IMR-90 (cell line): ENCODE measurements at regions of chr2 and their contacts with region 1.

Region 1: GRCh38 chr2:226799181-226799975 is at the start of gene IRS1:
- DNase-seq: peak; percentile 79
- ATAC-seq: peak; percentile 40
- H3K4me3 ChIP-seq: peak within 1 kb of the TSS; percentile 78
- H3K27ac ChIP-seq: peak within 1 kb of the TSS; percentile 97
- H3K4me1 ChIP-seq: peaks cover 2% of the 10 kb centered on the region; the same call in 1 of the 2 replicates
- H3K27me3 ChIP-seq: no peaks in the 10 kb centered on the region
- CTCF ChIP-seq: peak; percentile 62
- POLR2A ChIP-seq: no peak
- RAD21 ChIP-seq: peak; percentile 53
- total RNA-seq, gene IRS1: 21.1 and 29.4 TPM in 2 replicates

Region 2: GRCh38 chr2:225889446-225889850 is 909.9 kb before region 1 on chr2:
- CTCF ChIA-PET with region 1: interaction called, 4 read pairs
- POLR2A ChIA-PET with region 1: no interaction called
- dilution Hi-C with region 1: no loop called
- in situ Hi-C with region 1: loop called (anchors 5 kb)
- intact Hi-C with region 1: loop called (anchors 1 kb)
- DNase-seq: peak; percentile 94
- ATAC-seq: peak; percentile 81
- H3K4me3 ChIP-seq: no peak overlapping the region
- H3K27ac ChIP-seq: peak overlapping the region; percentile 40; the same call in 1 of the 2 replicates
- H3K4me1 ChIP-seq: peaks cover 6% of the 10 kb centered on the region
- H3K27me3 ChIP-seq: no peaks in the 10 kb centered on the region
- CTCF ChIP-seq: peak; percentile 85
- POLR2A ChIP-seq: no peak
- RAD21 ChIP-seq: peak; percentile 82

Region 3: GRCh38 chr2:226118471-226119430 is 680.6 kb before region 1 on chr2:
- CTCF ChIA-PET with region 1: interaction called, 3 read pairs
- POLR2A ChIA-PET with region 1: interaction called, 4 read pairs
- dilution Hi-C with region 1: no loop called
- in situ Hi-C with region 1: loop called (anchors 5 kb)
- intact Hi-C with region 1: no loop called
- DNase-seq: peak; percentile 91
- ATAC-seq: peak; percentile 42
- H3K4me3 ChIP-seq: peak overlapping the region; percentile 6; the same call in 1 of the 2 replicates
- H3K27ac ChIP-seq: peak overlapping the region; percentile 92
- H3K4me1 ChIP-seq: peaks cover 8% of the 10 kb centered on the region
- H3K27me3 ChIP-seq: no peaks in the 10 kb centered on the region
- CTCF ChIP-seq: no peak
- POLR2A ChIP-seq: no peak
- RAD21 ChIP-seq: no peak; the same call in 1 of the 2 replicates

Region 4: DNA sequence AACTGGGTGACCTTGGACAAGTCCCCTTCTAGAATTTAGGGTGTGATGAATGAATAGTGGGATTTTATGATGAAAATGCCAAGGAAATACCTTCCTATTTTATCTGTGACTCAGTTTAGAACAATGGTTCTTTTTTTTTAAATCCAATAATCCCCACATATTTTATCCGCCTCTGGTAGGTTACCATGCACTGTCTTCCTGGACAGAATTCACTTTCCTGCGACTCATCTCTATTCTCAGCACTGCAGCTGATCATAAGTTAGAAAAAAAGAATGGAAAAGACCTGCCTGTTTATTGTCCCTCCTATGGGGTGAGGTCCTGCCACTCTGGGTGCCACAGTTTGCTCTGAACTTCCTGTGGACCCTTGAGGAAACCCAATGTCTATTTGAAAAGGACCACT is 72.8 kb before region 1 on chr2:
- CTCF ChIA-PET with region 1: no interaction called
- POLR2A ChIA-PET with region 1: no interaction called
- dilution Hi-C with region 1: no loop called
- in situ Hi-C with region 1: no loop called
- intact Hi-C with region 1: loop called (anchors 2 kb)
- DNase-seq: peak; percentile 63
- ATAC-seq: peak; percentile 19; the same call in 1 of the 2 replicates
- H3K4me3 ChIP-seq: no peak overlapping the region
- H3K27ac ChIP-seq: peak overlapping the region; percentile 60; the same call in 1 of the 2 replicates
- H3K4me1 ChIP-seq: peaks cover 10% of the 10 kb centered on the region
- H3K27me3 ChIP-seq: no peaks in the 10 kb centered on the region
- CTCF ChIP-seq: no peak
- POLR2A ChIP-seq: no peak
- RAD21 ChIP-seq: no peak

Region 5: DNA sequence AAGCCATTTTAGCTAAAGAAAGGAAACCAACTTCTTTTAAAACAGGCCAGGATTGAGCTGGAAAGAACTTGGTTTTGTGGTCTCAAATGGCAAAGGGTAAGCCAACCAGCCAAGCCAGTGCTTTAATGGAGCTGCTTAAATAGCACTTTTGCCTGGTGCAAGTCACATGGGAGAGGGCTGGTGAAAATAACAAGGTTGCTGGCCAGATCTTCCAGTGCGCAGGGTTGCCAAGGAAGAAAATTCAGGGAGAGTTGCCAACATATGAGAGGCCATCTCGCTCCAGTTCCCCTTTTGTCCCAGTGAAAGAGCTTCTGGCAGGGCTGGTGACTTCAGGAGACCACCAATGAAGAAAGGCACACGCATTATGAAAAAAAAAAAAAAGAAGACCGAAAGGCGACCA is 57.0 kb before region 1 on chr2:
- CTCF ChIA-PET with region 1: interaction called, 3 read pairs
- POLR2A ChIA-PET with region 1: interaction called, 11 read pairs
- dilution Hi-C with region 1: no loop called
- in situ Hi-C with region 1: no loop called
- intact Hi-C with region 1: loop called (anchors 5 kb)
- DNase-seq: peak; percentile 13
- ATAC-seq: no peak
- H3K4me3 ChIP-seq: no peak overlapping the region
- H3K27ac ChIP-seq: peak overlapping the region; percentile 62; the same call in 1 of the 2 replicates
- H3K4me1 ChIP-seq: peaks cover 26% of the 10 kb centered on the region
- H3K27me3 ChIP-seq: no peaks in the 10 kb centered on the region
- CTCF ChIP-seq: no peak
- POLR2A ChIP-seq: no peak
- RAD21 ChIP-seq: no peak

Region 6: DNA sequence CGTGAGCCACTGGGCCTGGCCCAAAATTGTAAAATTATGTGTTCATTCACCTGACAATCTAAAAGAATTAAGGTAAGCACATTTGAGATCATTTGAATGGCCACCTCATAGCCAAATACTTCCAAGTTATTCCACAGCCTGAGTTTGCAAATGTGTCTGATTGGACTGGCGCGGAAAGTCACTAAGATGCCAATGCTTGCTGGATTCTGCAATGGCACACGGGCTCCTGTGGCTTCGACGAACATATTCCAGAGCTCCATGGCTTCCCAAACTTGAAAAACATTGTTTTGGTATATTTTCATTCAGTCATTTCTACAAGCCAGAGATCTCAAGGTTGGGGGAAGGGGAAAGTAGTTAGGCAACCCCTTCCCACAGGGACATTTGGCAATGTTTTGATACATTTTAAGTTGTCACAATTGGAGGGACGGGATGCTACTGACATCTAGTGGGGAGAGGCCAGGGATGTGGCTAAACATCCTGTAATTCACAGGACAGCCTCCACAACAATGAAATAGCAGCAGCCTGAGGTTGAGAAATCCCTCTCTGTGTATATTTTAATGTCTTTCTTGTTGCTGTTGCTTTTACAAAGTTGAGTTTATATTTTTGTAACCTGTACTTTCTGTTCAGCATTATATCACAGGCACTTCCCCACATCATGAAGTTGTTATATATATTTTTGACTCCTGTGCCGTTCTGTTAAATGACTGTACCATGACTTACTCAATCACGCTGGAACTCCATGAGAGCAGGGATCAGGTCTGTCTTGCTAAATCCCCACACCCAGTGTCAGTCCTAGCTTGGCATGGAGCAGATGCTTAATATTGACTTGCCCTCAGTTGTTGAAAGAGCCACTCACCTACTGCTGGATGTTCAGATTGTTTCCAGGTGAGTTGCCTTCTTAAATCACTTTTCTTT is 307.7 kb after region 1 on chr2:
- CTCF ChIA-PET with region 1: no interaction called
- POLR2A ChIA-PET with region 1: no interaction called
- dilution Hi-C with region 1: no loop called
- in situ Hi-C with region 1: no loop called
- intact Hi-C with region 1: loop called (anchors 1 kb)
- DNase-seq: peak; percentile 71
- ATAC-seq: peak; percentile 98
- H3K4me3 ChIP-seq: no peak overlapping the region
- H3K27ac ChIP-seq: no peak overlapping the region
- H3K4me1 ChIP-seq: no peaks in the 10 kb centered on the region
- H3K27me3 ChIP-seq: peaks cover 2% of the 10 kb centered on the region; the same call in 1 of the 2 replicates
- CTCF ChIP-seq: peak; percentile 93
- POLR2A ChIP-seq: no peak
- RAD21 ChIP-seq: peak; percentile 90

Region 7: DNA sequence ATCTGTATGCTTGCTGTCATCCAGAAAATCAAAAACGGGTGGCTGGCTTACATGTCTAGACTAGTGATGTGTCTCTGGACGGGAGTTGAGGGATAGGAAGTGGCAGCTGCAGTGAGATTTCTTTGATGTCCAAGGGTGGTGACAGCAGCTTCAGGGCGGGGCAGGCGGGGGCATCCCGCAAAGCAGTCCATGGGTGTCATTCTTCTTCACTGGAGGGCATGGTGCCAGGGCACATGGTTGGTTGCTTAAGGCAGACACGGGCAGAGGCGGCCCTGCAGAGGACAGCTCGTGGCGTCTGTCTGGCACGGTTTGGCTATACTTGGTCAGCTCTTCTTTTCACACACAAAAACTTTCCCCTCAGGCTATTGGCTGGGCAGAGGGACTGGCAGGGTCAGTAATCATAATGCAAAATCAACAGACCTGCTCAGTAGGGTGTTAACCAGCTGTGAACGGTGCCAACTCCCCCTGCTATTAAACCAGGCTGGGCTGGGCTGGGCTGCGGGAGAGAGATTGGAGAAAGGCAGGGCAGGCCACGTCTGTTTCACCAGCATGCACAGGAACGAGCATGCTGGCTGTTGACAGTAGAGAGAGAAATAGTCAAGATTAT is 428.8 kb after region 1 on chr2:
- CTCF ChIA-PET with region 1: no interaction called
- POLR2A ChIA-PET with region 1: no interaction called
- dilution Hi-C with region 1: no loop called
- in situ Hi-C with region 1: no loop called
- intact Hi-C with region 1: no loop called
- DNase-seq: no peak
- ATAC-seq: no peak
- H3K4me3 ChIP-seq: no peak overlapping the region
- H3K27ac ChIP-seq: no peak overlapping the region
- H3K4me1 ChIP-seq: no peaks in the 10 kb centered on the region
- H3K27me3 ChIP-seq: peaks cover 10% of the 10 kb centered on the region
- CTCF ChIP-seq: no peak
- POLR2A ChIP-seq: no peak
- RAD21 ChIP-seq: no peak